ENCODE measurements at regions of chr20 and their contacts with region 1.

Region 1: GRCh38 chr20:53578492-53579222 is 15.0 kb downstream of the ZNF217 start:
- DNase-seq: peak; percentile 4

Region 2: GRCh38 chr20:53869466-53870258 is 291.0 kb after region 1 on chr20:
- intact Hi-C with region 1: loop called in 1 of 2 experiments (anchors 5 kb)
- DNase-seq: no peak

Region 3: GRCh38 chr20:53915446-53916172 is 337.0 kb after region 1 on chr20:
- intact Hi-C with region 1: loop called (anchors 2 to 5 kb)
- DNase-seq: peak; percentile 98

Region 4: GRCh38 chr20:53939572-53940359 is 361.1 kb after region 1 on chr20:
- intact Hi-C with region 1: loop called in 1 of 2 experiments (anchors 5 kb)
- DNase-seq: peak; percentile 96

Region 5: GRCh38 chr20:54058420-54059139 is 479.9 kb after region 1 on chr20:
- intact Hi-C with region 1: loop called in 1 of 2 experiments (anchors 10 kb)
- DNase-seq: no peak

Region 6: DNA sequence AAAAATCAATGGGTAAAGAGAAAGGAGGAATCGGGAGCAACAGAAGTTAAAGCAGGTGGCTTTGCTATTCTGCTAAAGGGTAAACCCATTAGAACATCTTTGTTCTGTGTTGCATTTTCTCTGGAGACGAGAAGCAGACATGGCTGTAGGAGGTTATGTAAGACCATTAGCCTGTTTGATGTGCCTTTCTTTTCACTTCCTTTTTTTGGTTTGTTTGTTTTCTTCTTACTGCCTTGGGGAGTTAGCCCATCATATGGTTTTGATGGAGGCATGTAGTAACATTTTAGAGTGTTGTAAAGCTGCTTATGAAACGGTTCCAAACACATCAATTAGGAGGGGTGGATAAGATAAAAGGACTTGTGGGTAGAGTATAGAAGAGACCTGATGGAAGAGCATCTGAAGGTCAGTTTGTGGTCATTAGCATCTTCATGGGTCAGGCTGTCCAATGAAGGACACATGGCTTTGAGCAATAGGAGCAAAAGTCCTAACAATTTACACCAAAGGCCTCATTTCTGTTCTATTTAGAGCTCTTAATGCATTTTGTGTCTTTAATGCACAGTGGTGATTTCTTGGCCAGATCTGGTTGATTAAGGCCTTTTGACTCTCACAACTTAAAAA is 1027.8 kb after region 1 on chr20:
- intact Hi-C with region 1: no loop called
- DNase-seq: no peak

Measured in posterior vena cava (tissue), 2 donors.